ENCODE measurements at regions of chr5 and their contacts with region 1.

Region 1: DNA sequence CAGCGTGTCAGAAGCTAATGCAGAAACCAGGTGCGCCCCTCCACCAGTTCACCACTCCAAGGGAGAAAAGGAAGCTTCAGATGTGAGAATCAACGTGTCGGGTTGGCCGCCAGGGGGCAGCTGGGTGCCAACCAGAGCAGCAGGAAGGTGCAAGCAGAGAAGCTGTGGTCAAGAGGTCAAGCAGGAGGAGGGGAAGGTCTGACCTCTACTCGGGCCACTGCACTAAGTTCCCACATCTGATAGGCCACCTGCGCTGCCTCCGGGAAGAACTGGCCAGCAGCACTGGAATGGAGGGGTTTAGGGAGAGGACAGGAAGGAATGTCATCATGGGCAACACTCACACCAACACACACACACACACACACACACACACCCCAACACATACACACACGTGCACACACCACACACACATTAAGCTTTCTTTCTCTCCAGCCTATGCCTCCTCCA is 31.4 kb downstream of the ANXA6 start:
- DNase-seq: no peak
- H3K4me3 ChIP-seq: no peak overlapping the region
- H3K27ac ChIP-seq: no peak overlapping the region
- H3K4me1 ChIP-seq: peaks cover 0 to 44% (median 3%) of the 10 kb centered on the region in 3 donors
- H3K27me3 ChIP-seq: no peaks in the 10 kb centered on the region
- CTCF ChIP-seq: peak; percentile 72 to 86 (median 80)
- POLR2A ChIP-seq: no peak

Region 2: DNA sequence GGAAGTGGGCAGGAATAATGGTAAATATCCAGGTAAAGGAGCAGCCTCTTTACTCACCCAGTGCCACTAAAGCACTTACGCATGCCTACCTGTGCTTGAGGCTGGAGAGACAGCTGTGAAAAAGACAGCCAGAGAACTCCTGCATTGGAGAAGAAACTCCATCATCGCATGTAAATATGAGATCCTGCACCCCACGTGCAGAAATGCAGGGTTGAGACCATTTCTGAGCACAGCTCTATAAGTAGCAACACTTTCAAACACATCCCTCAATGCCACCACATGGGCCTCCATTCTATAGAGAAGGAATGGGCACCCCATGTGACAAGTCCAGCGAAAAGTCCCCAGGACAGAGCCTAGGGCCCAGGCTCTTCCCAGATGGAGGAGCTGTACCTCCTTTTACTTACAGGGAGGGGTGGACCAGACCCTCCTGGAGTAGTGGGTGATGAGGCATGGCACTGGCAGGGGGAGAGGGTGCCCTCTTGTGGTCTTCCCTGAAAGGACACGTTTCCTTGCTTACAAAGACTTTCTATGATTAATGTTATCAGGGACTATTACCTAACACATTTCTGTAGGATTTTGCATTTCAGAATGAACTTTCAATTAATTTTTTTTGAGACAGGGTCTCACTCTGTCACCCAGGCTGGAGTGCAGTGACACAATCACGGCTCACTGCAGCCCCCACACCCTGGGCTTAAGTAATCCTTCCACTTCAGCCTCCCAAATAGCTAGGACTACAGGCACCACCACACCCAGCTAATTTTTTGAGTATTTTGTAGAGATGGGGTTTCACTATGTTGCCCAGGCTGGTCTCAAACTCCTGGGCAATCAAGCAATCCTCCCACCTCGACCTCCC is 1691.8 kb before region 1 on chr5:
- intact Hi-C with region 1: no loop called
- DNase-seq: no peak
- H3K4me3 ChIP-seq: no peak overlapping the region
- H3K27ac ChIP-seq: peak overlapping the region in 3 of 4 donors; percentile 1 to 90 (median 89)
- H3K4me1 ChIP-seq: peaks cover 5 to 64% (median 31%) of the 10 kb centered on the region in 3 donors
- H3K27me3 ChIP-seq: no peaks in the 10 kb centered on the region
- CTCF ChIP-seq: peak; percentile 48 to 86 (median 76)
- POLR2A ChIP-seq: no peak

Region 3: GRCh38 chr5:151157426-151158286 is 31.4 kb after region 1 on chr5 and contains the start of gene ANXA6:
- intact Hi-C with region 1: loop called (anchors 5 kb)
- DNase-seq: no peak
- H3K4me3 ChIP-seq: peak within 1 kb of the TSS; percentile 49 to 85 (median 69)
- H3K27ac ChIP-seq: peak within 1 kb of the TSS; percentile 79 to 94 (median 88)
- H3K4me1 ChIP-seq: peaks cover 16 to 65% (median 24%) of the 10 kb centered on the region in 3 donors
- H3K27me3 ChIP-seq: peaks cover 0 to 17% (median 0%) of the 10 kb centered on the region in 4 donors
- CTCF ChIP-seq: no peak
- POLR2A ChIP-seq: peak in 2 of 4 donors; percentile 52 to 78
- total RNA-seq, gene ANXA6: 8.6 to 80.3 (median 24.9) TPM

Region 4: DNA sequence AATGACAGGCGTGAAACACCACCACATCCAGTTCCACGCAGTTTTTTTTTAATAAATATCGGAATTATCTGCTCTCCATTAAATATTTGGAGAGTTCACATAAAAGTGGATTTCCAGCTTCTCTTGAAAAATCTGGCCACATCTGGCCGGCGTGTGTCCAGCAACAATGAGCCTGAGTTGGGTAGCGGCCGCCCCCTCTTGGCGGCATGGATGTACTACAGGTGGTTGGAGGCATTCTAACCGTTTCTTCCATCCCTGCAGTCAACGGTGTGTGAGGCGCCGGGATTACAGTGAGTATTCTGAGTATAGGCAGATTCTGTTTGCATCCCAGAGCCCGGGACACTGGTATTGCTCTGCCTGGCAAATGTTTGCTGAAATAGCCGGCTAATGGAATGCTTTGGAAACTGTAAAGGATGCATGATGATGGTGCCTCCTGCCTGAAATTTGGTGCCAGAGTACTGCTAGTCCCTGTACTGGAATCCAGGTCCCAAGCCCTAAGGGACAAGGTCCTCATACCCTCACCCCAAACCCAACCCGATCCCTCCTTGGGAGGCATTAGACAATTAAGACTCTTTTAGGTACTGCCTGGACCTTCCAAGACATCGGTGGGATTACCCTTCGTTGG is 113.1 kb after region 1 on chr5:
- intact Hi-C with region 1: loop called (anchors 10 kb)
- DNase-seq: peak; percentile 32
- H3K4me3 ChIP-seq: peak overlapping the region in 1 of 4 donors; percentile 52
- H3K27ac ChIP-seq: peak overlapping the region in 3 of 4 donors; percentile 68 to 79 (median 70)
- H3K4me1 ChIP-seq: peaks cover 0 to 12% (median 10%) of the 10 kb centered on the region in 3 donors
- H3K27me3 ChIP-seq: no peaks in the 10 kb centered on the region
- CTCF ChIP-seq: peak; percentile 35 to 92 (median 67)
- POLR2A ChIP-seq: no peak